ENCODE measurements at regions of chr1 and their contacts with region 1.

Region 1: DNA sequence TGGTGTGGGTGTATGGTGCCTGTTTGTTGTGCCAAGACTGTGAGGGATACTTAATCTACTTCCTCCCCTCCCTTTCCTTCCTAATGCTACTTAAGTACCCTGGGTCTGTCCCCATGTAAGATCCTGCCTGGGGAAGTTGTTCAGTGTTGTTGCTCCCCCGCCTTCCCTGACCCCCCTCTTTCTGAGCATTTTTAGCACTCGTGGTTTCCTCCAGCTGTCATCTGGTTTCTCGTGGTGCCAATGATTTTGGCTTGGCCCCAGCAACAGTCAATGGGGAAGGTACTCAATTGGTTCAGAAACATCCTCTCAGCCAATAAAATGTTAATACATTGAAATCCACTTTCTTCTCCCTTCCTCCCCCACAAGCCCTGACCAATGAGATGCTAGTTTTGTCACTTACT is 8.0 kb upstream of the B4GALT3 start:
- DNase-seq: peak; percentile 94
- H3K4me3 Mint-ChIP-seq: peak overlapping the region; percentile 67
- H3K27ac Mint-ChIP-seq: peak overlapping the region; percentile 94
- H3K4me1 Mint-ChIP-seq: peaks cover 78% of the 10 kb centered on the region
- H3K27me3 Mint-ChIP-seq: no peaks in the 10 kb centered on the region

Region 2: GRCh38 chr1:160219062-160219929 is 966.0 kb before region 1 on chr1:
- CTCF ChIA-PET with region 1: no interaction called
- intact Hi-C with region 1: no loop called
- DNase-seq: no peak
- H3K4me3 Mint-ChIP-seq: no peak overlapping the region
- H3K27ac Mint-ChIP-seq: no peak overlapping the region
- H3K4me1 Mint-ChIP-seq: no peaks in the 10 kb centered on the region
- H3K27me3 Mint-ChIP-seq: no peaks in the 10 kb centered on the region

Region 3: GRCh38 chr1:161132410-161133219 is 52.7 kb before region 1 on chr1 and contains the start of gene DEDD:
- CTCF ChIA-PET with region 1: no interaction called
- intact Hi-C with region 1: loop called (anchors 2 kb)
- DNase-seq: peak; percentile 95
- H3K4me3 Mint-ChIP-seq: no peak within 1 kb of the TSS
- H3K27ac Mint-ChIP-seq: no peak within 1 kb of the TSS
- H3K4me1 Mint-ChIP-seq: peaks cover 44% of the 10 kb centered on the region
- H3K27me3 Mint-ChIP-seq: no peaks in the 10 kb centered on the region
- total RNA-seq, gene DEDD: 29.7 to 34.0 TPM

Region 4: GRCh38 chr1:161201828-161202725 is 16.8 kb after region 1 on chr1 and contains the start of gene NDUFS2:
- CTCF ChIA-PET with region 1: interaction called, 8 read pairs
- intact Hi-C with region 1: loop called (anchors 1 kb)
- DNase-seq: peak; percentile 99
- H3K4me3 Mint-ChIP-seq: peak within 1 kb of the TSS; percentile 92
- H3K27ac Mint-ChIP-seq: peak within 1 kb of the TSS; percentile 89
- H3K4me1 Mint-ChIP-seq: peaks cover 75% of the 10 kb centered on the region
- H3K27me3 Mint-ChIP-seq: no peaks in the 10 kb centered on the region
- total RNA-seq, gene NDUFS2: 126 to 130 TPM

Region 5: DNA sequence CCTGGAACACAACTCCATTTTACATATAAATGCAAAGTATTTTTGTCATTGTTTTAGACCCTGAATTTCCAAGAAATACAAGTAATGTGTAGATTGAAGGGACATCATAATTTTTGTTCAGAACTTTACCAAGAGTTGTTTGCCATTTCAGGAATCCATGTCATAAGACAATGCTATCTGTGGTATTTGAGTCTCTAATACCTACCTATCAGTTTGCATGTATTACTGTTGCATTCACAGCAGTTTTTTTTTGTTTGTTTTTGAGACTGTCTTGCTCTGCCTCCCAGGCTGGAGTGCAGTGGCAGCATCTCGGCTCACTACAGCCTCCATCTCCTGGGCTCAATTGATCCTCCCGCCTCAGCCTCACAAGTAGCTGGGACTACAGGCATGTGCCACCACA is 107.3 kb after region 1 on chr1:
- CTCF ChIA-PET with region 1: interaction called, 7 read pairs
- intact Hi-C with region 1: loop called (anchors 2 kb)
- DNase-seq: no peak
- H3K4me3 Mint-ChIP-seq: no peak overlapping the region
- H3K27ac Mint-ChIP-seq: no peak overlapping the region
- H3K4me1 Mint-ChIP-seq: no peaks in the 10 kb centered on the region
- H3K27me3 Mint-ChIP-seq: no peaks in the 10 kb centered on the region

Region 6: GRCh38 chr1:161749509-161750407 is 564.5 kb after region 1 on chr1 and contains the start of gene DUSP12:
- CTCF ChIA-PET with region 1: no interaction called
- intact Hi-C with region 1: loop called (anchors 10 kb)
- DNase-seq: peak; percentile 94
- H3K4me3 Mint-ChIP-seq: peak within 1 kb of the TSS; percentile 98
- H3K27ac Mint-ChIP-seq: peak within 1 kb of the TSS; percentile 98
- H3K4me1 Mint-ChIP-seq: peaks cover 45% of the 10 kb centered on the region
- H3K27me3 Mint-ChIP-seq: no peaks in the 10 kb centered on the region
- total RNA-seq, gene DUSP12: 28.2 to 28.4 TPM

Measured in activated naive CD4-positive, alpha-beta T cell treated with anti-CD3 and anti-CD28 coated beads for 36 hours (primary cell).